Thyroid gland (tissue), 4 donors: ENCODE measurements at regions of chr17 and their contacts with region 1.

Region 1: DNA sequence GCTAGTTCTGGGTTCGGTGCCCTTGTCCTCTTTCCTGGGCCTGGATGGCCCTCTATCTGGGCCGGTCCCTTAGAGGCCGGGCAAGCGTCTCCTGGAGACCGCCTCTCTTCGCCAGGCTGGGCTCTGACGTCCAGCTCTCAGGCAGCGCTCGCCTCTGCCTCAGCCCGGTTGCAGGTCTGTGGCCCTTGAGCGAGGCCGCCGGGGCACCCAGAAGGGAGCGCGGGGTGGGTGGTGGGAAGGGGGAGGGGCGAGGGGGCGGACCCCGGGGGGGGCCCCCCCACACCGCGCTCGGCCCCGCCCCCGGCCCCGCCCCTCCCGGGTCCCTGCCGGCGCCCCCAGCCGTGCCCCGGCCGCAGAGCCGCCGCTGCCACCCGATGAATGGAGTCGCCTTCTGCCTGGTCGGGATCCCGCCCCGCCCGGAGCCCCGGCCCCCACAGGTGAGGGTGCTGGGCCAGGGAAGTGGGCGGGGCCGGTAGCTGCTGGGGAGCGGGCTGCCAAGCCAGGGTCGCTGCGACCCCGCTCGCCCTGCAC is at the start of gene ARHGAP23:
- DNase-seq: peak; percentile 75 to 85
- H3K4me3 ChIP-seq: peak within 1 kb of the TSS; percentile 83 to 92 (median 86)
- H3K27ac ChIP-seq: peak within 1 kb of the TSS; percentile 64 to 85 (median 65)
- H3K4me1 ChIP-seq: peaks cover 8 to 26% of the 10 kb centered on the region in 2 donors
- H3K27me3 ChIP-seq: no peaks in the 10 kb centered on the region
- CTCF ChIP-seq: no peak
- POLR2A ChIP-seq: peak in 1 of 2 donors; percentile 10
- total RNA-seq, gene ARHGAP23: 13.0 to 40.8 (median 24.6) TPM

Region 2: DNA sequence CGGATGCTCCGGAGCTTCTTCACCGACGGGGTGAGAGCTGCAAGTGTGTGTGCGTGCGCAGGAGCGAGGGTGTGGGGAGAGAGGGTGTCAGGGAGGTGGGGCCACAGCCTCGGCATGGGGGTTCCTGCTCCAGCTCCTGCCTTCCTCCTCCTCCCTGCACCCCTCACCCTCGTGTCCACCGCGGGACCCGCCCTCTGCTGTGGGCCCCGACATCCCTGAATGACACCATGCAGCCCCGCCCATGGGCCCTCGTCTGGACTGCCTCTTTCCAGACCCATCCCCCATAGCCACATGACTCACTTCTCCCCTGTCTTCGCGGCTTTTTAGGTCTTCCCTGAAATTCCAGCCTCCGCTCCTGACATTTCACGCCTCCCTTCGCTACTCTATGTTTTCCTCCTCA is 41.7 kb after region 1 on chr17:
- intact Hi-C with region 1: loop called (anchors 10 kb)
- DNase-seq: no peak
- H3K4me3 ChIP-seq: no peak overlapping the region
- H3K27ac ChIP-seq: no peak overlapping the region
- H3K4me1 ChIP-seq: peaks cover 2 to 18% of the 10 kb centered on the region in 2 donors
- H3K27me3 ChIP-seq: no peaks in the 10 kb centered on the region
- CTCF ChIP-seq: no peak
- POLR2A ChIP-seq: no peak

Region 3: GRCh38 chr17:38584350-38584925 is 156.3 kb after region 1 on chr17:
- intact Hi-C with region 1: loop called (anchors 10 kb)
- DNase-seq: peak; percentile 59 to 64
- H3K4me3 ChIP-seq: no peak overlapping the region
- H3K27ac ChIP-seq: no peak overlapping the region
- H3K4me1 ChIP-seq: peaks cover 0 to 13% of the 10 kb centered on the region in 2 donors
- H3K27me3 ChIP-seq: no peaks in the 10 kb centered on the region
- CTCF ChIP-seq: peak; percentile 69 to 95 (median 82)
- POLR2A ChIP-seq: no peak